K562 (cell line): ENCODE measurements at regions of chr11 and their contacts with region 1.

Region 1: DNA sequence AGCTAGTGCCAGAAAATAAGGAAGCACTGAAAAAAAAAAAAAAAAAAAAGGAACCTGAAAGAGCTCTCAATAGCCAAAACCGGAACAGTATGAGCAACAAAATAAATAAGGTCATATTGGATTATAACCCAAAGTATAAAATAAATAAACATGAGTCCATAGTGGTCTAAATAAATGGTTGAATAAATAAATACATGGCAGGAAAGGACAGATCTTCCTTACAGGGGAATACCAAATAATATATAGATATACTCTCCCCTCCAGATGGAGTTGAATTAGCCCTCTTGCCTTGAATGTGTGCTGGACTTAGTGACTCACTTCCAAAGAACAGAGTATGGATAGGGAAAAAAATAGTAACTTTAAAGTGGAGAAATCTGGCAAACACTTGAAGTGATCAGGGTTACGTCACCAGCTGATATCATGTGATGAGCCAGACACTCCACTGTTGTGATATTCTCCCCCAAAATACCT is 14.3 kb upstream of the ARRB1 start:
- DNase-seq: no peak
- ATAC-seq: no peak
- H3K4me3 ChIP-seq: no peak overlapping the region
- H3K27ac ChIP-seq: no peak overlapping the region
- H3K4me1 ChIP-seq: peaks cover 0 to 4% of the 10 kb centered on the region in 2 experiments; a peak in 2 of 5 replicates
- H3K27me3 ChIP-seq: no peaks in the 10 kb centered on the region
- CTCF ChIP-seq: no peak
- EP300 ChIP-seq: no peak
- POLR2A ChIP-seq: no peak
- RAD21 ChIP-seq: no peak

Region 2: DNA sequence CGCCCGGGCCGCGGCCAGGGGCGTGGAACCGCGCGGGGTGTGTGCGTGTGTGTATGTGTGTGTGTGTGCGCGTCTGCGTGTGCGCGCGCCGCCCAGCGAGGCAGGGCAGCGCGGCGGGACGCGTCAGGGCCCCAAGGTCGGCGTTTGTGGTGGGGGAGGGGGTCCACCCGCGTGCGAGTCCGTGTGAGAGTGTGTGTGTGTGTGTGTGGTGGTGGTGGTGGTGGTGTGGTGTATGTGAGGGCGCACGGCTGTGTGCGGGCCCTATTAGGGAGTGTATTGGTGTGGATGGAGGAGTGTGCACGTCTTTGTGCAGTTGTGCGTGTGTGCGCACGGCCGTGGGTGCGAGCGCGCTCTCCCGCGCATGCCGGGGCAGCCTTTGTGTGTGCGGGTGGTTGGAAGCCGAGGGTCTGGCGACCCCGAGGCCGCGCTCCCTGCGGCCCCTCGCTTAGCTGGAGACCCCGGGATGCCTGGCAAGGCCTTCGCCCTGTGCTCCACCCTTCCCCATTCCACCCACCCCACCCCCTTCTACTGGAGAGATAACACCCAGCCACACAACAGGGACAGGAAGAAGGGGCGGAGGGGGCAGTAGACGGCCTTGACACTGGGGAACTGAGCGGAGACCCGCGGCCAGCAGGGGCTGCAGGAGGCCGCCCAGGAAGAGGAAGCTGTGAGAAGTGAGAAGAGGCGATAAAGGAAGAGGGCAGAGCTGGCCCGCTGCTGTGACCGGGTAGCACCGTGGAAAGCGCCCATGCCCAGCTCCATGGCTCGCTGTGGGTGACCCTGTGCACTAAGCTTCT is 13.8 kb before region 1 on chr11:
- CTCF ChIA-PET with region 1: no interaction called
- POLR2A ChIA-PET with region 1: interaction called, 11 read pairs
- in situ Hi-C with region 1: no loop called
- intact Hi-C with region 1: no loop called
- DNase-seq: peak; percentile 83 to 93 (median 88)
- ATAC-seq: peak; percentile 85
- H3K4me3 ChIP-seq: peak overlapping the region; percentile 69
- H3K27ac ChIP-seq: peak overlapping the region; percentile 81
- H3K4me1 ChIP-seq: peaks cover 43 to 49% of the 10 kb centered on the region in 2 experiments
- H3K27me3 ChIP-seq: no peaks in the 10 kb centered on the region
- CTCF ChIP-seq: peak; percentile 62 to 75 (median 68); a peak in 5 of 6 replicates
- EP300 ChIP-seq: peak; percentile 36; the same call in 1 of the 2 replicates
- POLR2A ChIP-seq: peak; percentile 73; the same call in 1 of the 2 replicates
- RAD21 ChIP-seq: peak; percentile 50 to 69

Region 3: GRCh38 chr11:75697906-75698563 is 332.3 kb after region 1 on chr11:
- CTCF ChIA-PET with region 1: no interaction called
- POLR2A ChIA-PET with region 1: no interaction called
- in situ Hi-C with region 1: no loop called
- intact Hi-C with region 1: no loop called
- DNase-seq: peak in 1 of 4 experiments; percentile 1
- ATAC-seq: no peak
- H3K4me3 ChIP-seq: no peak overlapping the region
- H3K27ac ChIP-seq: no peak overlapping the region
- H3K4me1 ChIP-seq: no peaks in the 10 kb centered on the region; a peak in 1 of 5 replicates
- H3K27me3 ChIP-seq: peaks cover 0 to 9% of the 10 kb centered on the region in 2 experiments; a peak in 2 of 5 replicates
- CTCF ChIP-seq: no peak
- EP300 ChIP-seq: no peak
- POLR2A ChIP-seq: no peak
- RAD21 ChIP-seq: no peak

Region 4: GRCh38 chr11:76102802-76103201 is 737.1 kb after region 1 on chr11:
- CTCF ChIA-PET with region 1: no interaction called
- POLR2A ChIA-PET with region 1: no interaction called
- in situ Hi-C with region 1: no loop called
- intact Hi-C with region 1: no loop called
- DNase-seq: peak in 1 of 4 experiments; percentile 24
- ATAC-seq: no peak
- H3K4me3 ChIP-seq: no peak overlapping the region
- H3K27ac ChIP-seq: no peak overlapping the region
- H3K4me1 ChIP-seq: no peaks in the 10 kb centered on the region; a peak in 1 of 5 replicates
- H3K27me3 ChIP-seq: no peaks in the 10 kb centered on the region
- CTCF ChIP-seq: no peak
- EP300 ChIP-seq: no peak
- POLR2A ChIP-seq: no peak
- RAD21 ChIP-seq: no peak